Mucosa of descending colon (tissue), 3 donors: ENCODE measurements at regions of chr19 and their contacts with region 1.

Region 1: DNA sequence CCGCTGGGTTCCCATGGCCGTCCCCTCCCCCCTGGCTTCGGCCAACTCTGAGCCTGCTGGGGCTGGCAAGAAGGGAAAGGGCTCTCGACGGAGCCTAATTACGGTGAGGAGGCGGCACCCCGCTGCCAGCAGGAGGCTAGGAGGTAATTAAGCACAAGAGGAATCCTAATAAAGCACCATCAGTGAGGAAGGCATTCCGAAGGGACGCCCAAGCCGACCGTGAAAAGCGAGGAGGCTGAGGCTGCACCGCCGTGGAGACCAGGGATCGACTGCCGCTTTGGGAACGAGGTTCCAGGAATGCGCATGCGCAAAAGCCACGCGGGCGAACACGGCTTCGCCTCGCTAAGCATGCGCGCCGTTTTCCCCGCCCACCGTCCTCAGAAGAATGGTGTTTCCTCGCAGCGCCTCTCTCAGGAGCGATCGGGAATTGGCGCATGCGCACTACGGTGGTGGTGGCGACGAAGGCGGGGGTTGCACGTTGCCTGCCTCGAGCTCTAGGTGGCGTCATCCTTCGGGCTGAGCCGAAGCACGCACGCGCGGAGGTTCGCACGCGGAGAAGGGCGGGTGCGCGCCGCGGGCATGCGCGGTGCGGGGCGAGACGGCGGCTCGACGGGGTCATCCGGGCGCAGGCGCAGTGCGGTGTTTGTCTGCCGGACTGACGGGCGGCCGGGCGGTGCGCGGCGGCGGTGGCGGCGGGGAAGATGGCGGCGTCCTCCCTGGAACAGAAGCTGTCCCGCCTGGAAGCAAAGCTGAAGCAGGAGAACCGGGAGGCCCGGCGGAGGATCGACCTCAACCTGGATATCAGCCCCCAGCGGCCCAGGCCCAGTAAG is at the start of gene MAP2K7:
- DNase-seq: peak; percentile 100
- ATAC-seq: peak; percentile 94
- H3K4me3 ChIP-seq: peak within 1 kb of the TSS; percentile 54
- H3K4me1 ChIP-seq: peaks cover 21% of the 10 kb centered on the region
- CTCF ChIP-seq: peak; percentile 63
- total RNA-seq, gene MAP2K7: 31.5 to 49.2 (median 41.7) TPM

Region 2: GRCh38 chr19:7629347-7630054 is 274.0 kb before region 1 on chr19 and contains the starts of genes PET100 and XAB2:
- intact Hi-C with region 1: no loop called
- DNase-seq: peak; percentile 95 to 97 (median 96)
- ATAC-seq: peak; percentile 98
- H3K4me3 ChIP-seq: peak within 1 kb of the TSS; percentile 96
- H3K4me1 ChIP-seq: peaks cover 23% of the 10 kb centered on the region
- CTCF ChIP-seq: no peak
- total RNA-seq, gene PET100: 91.1 to 153 (median 110) TPM
- total RNA-seq, gene XAB2: 28.7 to 39.2 (median 30.7) TPM

Region 3: GRCh38 chr19:7783991-7784421 is 119.5 kb before region 1 on chr19:
- intact Hi-C with region 1: no loop called
- DNase-seq: no peak
- ATAC-seq: peak; percentile 23
- H3K4me3 ChIP-seq: no peak overlapping the region
- H3K4me1 ChIP-seq: peaks cover 1% of the 10 kb centered on the region
- CTCF ChIP-seq: no peak

Region 4: DNA sequence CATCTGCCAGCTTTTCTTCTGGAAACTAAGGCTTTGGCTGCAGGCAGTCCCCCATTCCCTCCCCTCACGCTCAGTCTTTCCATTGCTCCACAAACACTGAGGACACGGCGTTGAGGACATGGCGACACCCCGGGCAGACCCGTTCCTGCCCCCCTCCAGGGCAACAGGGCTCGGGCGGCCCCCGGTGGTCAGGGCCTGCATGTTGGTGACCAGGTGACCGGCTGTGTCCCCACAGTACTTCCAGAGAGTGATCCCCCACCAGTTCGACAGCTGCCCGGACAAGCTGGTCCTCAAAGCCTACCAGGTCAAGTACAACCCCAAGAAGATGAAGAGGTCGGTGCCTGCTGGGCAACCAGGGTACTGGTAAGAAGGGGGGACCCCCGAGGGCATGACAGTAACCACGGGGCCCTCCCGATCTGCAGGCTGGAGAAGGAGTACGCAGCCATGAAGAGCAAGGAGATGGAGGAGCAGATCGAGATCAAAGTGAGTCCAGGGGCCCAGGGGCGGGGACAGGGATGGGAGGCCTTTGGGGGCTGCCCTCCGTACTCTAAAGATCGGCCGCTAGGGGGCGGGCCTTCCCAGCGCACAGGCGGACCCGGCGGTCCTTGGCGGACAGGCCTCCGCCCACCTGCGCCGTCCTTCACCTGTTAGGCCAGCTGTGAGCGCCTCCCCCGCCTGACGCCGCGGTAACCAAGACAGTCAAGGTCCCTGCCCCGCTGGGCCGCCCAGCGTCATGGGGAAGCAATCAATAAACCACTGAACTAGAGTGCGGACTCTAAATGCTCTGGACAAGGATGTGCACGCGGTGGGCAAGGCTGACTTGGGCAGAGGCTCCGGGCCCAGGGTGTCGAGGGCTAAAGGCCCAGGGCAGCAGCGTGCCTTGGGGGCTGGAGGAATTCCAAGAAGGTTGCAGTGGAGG is 50.3 kb before region 1 on chr19:
- intact Hi-C with region 1: loop called in 1 of 2 experiments (anchors 10 kb)
- DNase-seq: peak; percentile 88 to 90 (median 89)
- ATAC-seq: peak; percentile 94
- H3K4me3 ChIP-seq: no peak overlapping the region
- H3K4me1 ChIP-seq: peaks cover 11% of the 10 kb centered on the region
- CTCF ChIP-seq: peak; percentile 58

Region 5: DNA sequence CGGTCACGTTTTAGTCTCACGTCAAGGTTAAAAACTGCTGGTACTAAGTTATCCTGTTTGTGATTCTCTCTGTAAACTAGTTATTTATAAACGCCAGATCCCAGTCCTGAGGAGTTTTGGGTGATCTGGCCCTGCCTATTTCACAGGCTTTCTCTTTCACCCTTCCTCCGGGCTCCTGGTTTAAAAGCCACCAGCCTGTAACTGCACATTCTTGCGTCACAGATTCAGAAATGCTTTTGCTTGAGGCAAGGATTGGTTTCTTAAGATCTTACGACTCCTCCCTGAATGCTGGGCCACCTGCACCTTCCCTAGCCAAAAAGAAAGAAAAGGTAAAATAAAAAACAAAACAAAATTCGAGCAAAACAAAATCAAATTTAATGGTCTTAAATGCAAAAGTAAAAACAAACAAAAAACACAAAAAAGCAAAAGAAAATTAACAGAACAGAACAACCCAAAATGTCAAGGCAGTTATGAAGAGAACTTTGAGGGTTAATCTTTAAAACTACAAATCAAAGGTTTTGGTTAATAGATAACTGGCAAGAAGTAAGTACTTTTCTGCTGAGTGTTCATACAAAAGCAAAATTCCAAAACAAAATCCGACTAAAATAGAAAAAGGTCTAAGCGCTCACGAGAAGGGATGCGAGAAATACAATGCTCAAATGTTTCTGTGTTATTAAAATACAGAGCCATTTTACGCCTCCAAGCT is 58.6 kb after region 1 on chr19:
- intact Hi-C with region 1: no loop called
- DNase-seq: no peak
- ATAC-seq: no peak
- H3K4me3 ChIP-seq: no peak overlapping the region
- H3K4me1 ChIP-seq: no peaks in the 10 kb centered on the region
- CTCF ChIP-seq: no peak

Region 6: DNA sequence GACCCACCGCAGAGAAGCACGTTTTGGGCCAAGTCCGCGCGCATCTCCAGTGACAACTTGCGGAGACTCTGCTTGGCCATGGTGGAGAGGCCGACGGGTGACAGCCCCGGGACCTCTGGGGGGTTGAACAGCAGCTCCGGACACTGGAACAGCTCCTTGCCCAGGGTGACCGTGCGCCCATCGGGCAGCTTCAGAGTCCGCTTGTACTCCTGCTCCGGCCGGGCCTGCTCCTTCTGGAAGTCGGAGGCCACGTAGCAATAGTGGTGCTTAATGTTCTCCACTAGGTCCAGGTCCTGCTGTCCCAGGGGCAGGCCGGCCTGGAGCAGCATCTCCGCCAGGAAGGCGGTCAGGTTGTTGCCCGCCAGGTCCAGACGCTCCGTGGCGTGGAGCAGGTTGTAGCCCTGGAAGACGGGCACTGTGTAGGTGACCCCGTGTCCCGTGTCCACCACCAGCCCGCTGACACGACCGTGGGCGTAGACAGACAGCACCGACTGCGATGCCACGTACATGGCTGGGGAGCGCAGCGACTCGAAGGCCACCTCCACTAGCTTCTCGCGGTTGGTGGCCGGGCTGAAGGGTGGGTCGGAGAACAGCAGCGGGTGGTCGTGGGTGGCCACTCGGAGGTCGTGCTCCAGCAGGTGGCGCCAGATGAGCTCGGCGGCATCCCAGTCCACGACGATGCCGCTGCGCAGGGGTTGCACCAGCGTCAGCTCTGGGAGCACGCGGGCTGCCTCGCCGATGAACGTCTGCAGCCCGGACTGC is 794.4 kb after region 1 on chr19:
- intact Hi-C with region 1: no loop called
- DNase-seq: no peak
- ATAC-seq: no peak
- H3K4me3 ChIP-seq: no peak overlapping the region
- H3K4me1 ChIP-seq: no peaks in the 10 kb centered on the region
- CTCF ChIP-seq: no peak